ENCODE measurements at regions of chr1 and their contacts with region 1.

Region 1: DNA sequence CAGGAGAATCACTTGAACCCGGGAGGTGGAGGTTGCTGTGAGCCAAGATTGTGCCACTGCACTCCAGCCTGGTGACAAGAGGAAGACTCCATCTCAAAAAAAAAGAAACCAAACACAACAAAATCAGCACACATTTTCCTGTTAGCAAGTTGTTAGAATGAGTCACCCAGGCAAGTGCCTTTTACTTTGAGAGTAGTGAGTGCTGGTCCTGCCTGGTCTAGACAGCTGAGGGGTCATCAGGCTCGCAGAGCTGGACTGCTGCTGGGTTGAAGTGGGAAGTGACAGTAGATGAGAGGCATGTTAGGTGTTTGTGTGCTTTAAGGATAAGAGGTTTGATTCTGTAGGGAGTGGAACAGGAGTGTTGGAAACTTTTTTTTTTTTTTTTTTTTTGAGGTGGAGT is 31.9 kb downstream of the GNPAT start:
- DNase-seq: peak; percentile 85
- H3K4me3 ChIP-seq: no peak overlapping the region
- H3K27ac ChIP-seq: peak overlapping the region; percentile 74
- H3K4me1 ChIP-seq: peaks cover 21% of the 10 kb centered on the region
- H3K27me3 ChIP-seq: no peaks in the 10 kb centered on the region
- CTCF ChIP-seq: no peak
- POLR2A ChIP-seq: no peak

Region 2: GRCh38 chr1:231324660-231325059 is 51.8 kb after region 1 on chr1:
- CTCF ChIA-PET with region 1: interaction called, 3 read pairs
- POLR2A ChIA-PET with region 1: no interaction called
- dilution Hi-C with region 1: no loop called
- intact Hi-C with region 1: loop called (anchors 2 kb)
- DNase-seq: no peak
- H3K4me3 ChIP-seq: no peak overlapping the region
- H3K27ac ChIP-seq: no peak overlapping the region
- H3K4me1 ChIP-seq: peaks cover 11% of the 10 kb centered on the region
- H3K27me3 ChIP-seq: no peaks in the 10 kb centered on the region
- CTCF ChIP-seq: no peak
- POLR2A ChIP-seq: no peak